ENCODE measurements at regions of chr2 and their contacts with region 1.

Region 1: DNA sequence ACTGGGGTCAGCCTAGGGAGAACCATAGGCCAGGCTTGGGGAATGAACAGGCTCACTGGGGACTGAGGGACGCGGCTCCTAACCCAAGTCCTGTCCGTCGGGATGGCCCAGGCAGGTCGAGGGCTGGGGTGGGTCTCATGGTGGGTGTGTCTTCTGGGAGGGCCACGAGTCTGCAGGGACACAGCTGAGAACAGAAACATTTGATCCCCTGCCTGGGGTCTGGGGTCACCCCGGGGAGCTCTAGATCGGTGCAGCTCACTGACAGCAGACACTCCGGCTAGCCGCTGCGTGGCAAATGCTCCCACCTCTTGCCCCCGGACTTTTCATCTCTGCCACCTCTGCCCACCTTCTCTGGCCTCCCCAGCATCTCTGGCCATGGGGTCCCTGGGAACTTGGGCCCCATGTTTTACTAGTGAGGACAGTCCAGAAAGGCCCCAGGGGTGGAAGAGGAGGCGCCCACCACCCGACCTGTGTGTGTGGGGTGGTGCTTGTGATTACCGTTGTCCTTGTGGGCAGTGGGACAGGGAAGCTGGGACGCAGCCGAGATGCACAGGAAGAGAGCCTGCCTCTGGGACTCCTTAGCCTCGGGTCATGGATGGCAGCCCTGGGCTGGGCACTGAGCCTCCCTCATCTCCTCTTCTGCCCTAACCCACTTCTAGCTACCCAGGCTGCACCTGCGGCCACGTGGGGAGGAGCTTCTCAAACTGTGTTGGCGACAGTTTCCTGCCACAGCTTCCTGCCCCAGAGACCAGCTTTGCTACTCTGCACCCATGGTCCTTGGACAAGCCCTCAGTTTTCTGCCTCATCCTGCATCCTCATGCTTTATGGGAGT is 4.9 kb downstream of the ZAP70 start:
- DNase-seq: peak; percentile 89
- H3K4me3 Mint-ChIP-seq: peak overlapping the region; percentile 95
- H3K27ac Mint-ChIP-seq: peak overlapping the region; percentile 98
- H3K4me1 Mint-ChIP-seq: peaks cover 76% of the 10 kb centered on the region
- H3K27me3 Mint-ChIP-seq: no peaks in the 10 kb centered on the region

Region 2: DNA sequence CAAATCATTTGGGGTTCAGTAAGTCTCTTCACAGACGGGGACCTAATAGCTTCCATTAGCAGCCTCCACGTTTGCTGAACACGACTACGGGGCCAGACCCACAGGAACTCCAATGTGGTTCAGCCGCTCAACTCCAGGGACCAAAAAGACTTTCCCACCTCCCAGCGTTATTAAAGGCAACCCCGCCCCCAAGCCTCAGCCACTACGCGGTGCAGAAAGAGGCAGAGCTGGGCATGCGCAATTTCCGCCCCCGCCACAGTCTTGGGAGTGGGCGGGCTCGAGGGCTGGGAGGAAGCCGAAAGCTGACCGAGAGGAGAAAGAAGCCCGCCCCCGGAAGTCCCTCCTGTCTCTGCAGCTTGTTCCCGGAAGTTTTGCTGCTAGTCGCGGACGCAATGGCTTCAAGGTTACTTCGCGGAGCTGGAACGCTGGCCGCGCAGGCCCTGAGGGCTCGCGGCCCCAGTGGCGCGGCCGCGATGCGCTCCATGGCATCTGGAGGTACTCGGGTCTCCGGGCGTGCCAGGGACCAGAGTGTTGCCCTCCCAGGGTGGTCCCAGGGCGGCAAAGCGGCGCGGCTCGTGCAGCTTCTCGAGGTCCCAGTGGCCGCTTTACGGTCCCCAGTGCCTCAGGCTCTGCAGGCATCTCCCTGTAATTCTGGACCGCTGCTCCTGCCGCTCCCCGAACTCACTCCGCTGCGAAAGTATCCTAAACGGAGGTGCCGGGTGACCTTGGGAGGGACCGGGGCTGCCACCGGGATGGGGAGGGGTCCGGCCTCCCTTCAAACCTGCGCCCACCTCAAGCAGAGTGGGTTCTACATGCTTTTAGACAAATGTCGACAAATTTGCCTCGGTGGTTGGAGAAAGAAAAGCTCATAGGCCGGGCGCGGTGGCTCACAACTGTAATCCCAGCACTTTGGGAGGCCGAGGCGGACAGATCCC is 72.3 kb before region 1 on chr2 and contains the start of gene COX5B:
- CTCF ChIA-PET with region 1: interaction called, 4 read pairs
- POLR2A ChIA-PET with region 1: interaction called, 29 read pairs
- DNase-seq: peak; percentile 99
- H3K4me3 Mint-ChIP-seq: peak within 1 kb of the TSS; percentile 91
- H3K27ac Mint-ChIP-seq: peak within 1 kb of the TSS; percentile 92
- H3K4me1 Mint-ChIP-seq: peaks cover 24% of the 10 kb centered on the region
- H3K27me3 Mint-ChIP-seq: peaks cover 3% of the 10 kb centered on the region
- total RNA-seq, gene COX5B: 192 to 203 TPM

Region 3: DNA sequence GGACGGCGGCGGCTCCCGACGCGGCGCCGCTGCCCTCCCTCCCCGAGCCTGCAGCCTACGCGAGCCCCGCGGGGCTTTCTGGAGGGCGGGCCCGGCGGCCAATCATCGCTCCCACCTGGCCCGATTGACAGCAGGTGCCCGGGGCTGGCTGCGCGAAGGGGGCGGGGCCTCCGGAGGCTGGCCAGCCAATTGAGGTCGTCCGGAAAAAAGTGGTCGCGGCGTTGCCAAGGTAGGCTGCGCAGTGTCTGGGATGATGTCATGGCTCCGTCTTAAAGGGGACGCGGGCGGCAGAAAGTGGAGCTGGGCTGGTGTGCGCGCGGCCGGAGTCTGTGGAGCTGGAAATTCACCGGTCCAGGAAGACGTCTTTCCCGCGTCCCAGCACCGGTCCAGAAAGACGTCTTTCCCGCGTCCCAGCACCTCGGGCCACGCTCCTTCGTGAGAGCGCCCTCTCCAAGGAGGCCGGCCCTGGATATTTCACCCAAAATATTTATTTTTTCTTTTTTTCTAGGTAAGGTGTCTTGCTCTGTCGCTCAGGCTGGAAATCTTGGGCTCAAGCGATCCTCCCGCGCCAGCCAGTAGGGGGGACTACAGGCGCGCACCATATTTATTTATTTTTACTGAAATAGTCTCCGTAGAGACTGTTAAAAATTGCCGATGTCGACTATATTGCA is 54.2 kb before region 1 on chr2 and contains the start of gene ACTR1B:
- CTCF ChIA-PET with region 1: interaction called, 4 read pairs
- POLR2A ChIA-PET with region 1: interaction called, 15 read pairs
- DNase-seq: peak; percentile 98
- H3K4me3 Mint-ChIP-seq: peak within 1 kb of the TSS; percentile 98
- H3K27ac Mint-ChIP-seq: peak within 1 kb of the TSS; percentile 99
- H3K4me1 Mint-ChIP-seq: peaks cover 34% of the 10 kb centered on the region
- H3K27me3 Mint-ChIP-seq: no peaks in the 10 kb centered on the region
- total RNA-seq, gene ACTR1B: 97.3 to 98.8 TPM

Region 4: DNA sequence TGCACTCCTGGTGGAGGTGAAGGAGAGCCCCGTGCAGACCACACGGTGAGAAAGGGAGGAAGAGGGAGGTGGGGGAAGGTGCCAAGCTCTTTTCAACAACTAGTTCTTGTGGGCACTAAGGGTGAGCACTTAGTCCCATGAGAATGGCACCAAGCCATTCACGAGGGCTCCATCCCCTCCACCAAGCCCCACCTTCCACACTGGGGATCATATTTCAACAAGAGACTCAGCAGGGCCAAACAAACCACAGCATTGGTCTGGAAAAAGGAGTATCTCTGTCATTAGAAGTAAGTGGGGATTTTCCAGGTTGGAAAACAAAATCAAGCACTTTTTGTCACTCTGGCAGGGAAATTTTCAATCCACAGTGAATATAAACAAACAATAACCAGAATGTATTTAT is 33.5 kb after region 1 on chr2:
- CTCF ChIA-PET with region 1: interaction called, 96 read pairs
- POLR2A ChIA-PET with region 1: interaction called, 119 read pairs
- DNase-seq: no peak
- H3K4me3 Mint-ChIP-seq: no peak overlapping the region
- H3K27ac Mint-ChIP-seq: no peak overlapping the region
- H3K4me1 Mint-ChIP-seq: peaks cover 16% of the 10 kb centered on the region
- H3K27me3 Mint-ChIP-seq: no peaks in the 10 kb centered on the region

Region 5: DNA sequence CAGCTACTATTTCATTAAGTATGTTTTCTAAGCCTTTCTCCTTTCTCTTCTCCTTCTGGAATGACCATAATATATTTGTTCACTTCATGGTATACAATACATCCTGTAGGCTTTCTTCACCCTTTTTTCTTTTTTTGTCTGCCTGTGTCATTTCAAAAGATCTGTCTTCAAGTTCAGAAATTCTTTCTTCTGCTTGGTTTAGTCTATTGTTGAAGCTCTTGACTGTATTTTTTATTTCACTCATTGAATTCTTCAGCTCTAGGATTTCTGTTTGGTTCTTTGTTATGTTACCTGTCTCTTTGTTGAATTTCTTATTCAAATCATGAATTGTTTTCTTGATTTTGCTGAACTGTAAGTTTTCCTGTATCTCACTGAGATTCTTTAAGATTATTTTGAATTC is 167.6 kb after region 1 on chr2:
- CTCF ChIA-PET with region 1: no interaction called
- POLR2A ChIA-PET with region 1: no interaction called
- DNase-seq: no peak
- H3K4me3 Mint-ChIP-seq: no peak overlapping the region
- H3K27ac Mint-ChIP-seq: no peak overlapping the region
- H3K4me1 Mint-ChIP-seq: no peaks in the 10 kb centered on the region
- H3K27me3 Mint-ChIP-seq: no peaks in the 10 kb centered on the region

Measured in activated CD4-positive, alpha-beta memory T cell treated with anti-CD3 and anti-CD28 coated beads, Interleukin-2, amount 10 ng/mL, durations not matched to agents 7 days and 5 days (primary cell).